Cardiac septum (tissue), 1 donor: ENCODE measurements at regions of chr15 and their contacts with region 1.

Region 1: DNA sequence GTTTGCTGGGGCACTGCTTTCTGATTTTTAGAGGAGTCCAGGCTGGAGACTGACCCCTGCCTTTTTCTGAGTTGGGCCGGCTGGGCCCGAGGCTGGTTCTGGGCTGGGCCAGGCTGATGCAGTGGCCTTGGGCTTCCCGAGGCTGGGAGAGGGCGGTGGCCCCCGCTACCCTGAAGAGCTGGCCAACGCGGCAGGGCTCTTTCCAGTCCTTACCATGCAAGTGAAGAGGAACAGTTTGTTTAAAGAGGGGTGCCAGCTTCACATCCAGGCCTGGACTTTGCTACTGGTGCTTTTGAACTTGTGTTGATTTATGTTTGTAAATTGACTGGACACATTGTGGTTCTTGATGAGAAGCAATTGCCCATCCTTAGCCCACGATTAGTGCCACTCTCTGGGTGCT is 15.3 kb downstream of the IGF1R start:
- DNase-seq: no peak

Region 2: GRCh38 chr15:98682992-98683701 is 19.5 kb after region 1 on chr15:
- intact Hi-C with region 1: loop called (anchors 2 kb)
- DNase-seq: no peak